GM10248 (cell line): ENCODE measurements at regions of chr7 and their contacts with region 1.

Region 1: GRCh38 chr7:106094800-106095199 is 17.3 kb downstream of the SYPL1 start:
- DNase-seq: no peak
- CTCF ChIP-seq: peak; percentile 27

Region 2: DNA sequence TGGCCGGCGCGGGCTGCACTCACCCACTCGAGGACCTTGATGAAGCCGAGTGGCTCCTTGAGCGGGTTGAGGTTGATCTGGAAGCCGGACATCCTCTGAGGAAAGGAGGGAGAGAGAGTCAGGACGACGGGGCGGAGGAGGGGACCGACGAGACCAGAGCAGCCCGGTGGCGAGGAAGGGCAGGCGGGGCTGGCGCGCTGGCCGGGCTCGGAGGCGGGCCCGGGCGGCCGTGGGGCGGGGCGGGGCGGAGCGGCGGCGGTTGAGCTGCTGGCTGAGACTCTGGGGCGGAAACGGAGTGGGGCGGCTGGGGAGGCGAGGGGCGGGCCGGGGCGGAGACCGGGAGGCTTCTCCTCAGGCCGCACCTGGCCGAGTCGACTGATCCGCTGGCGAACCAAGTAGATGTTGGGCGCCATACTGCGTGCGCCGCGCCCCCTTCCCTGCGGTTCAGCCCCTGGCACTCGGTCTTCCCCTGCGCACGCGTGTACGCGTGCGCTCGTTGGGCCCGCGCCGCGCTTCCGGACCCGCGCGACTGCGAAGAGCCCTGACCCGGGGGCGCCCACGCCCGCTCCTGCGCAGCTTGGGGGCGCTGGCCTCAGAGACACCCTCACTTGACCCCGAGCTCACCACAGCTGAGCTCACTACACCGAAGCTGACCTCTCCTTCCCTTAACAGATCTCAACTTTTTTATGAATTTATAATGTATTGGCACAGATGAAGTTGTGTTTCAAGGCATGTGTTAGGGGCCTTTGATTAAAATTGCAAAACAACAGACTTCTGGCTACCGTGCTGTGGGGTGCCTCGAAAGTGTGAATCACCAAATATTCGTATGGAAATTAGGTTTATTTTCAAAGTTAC is 17.5 kb after region 1 on chr7 and contains the start of gene SYPL1:
- CTCF ChIA-PET with region 1: interaction called, 16 read pairs
- POLR2A ChIA-PET with region 1: no interaction called
- DNase-seq: peak; percentile 93
- CTCF ChIP-seq: no peak